ENCODE measurements at regions of chrX and their contacts with region 1.

Region 1: GRCh38 chrX:70970482-70970995 is 39.6 kb upstream of the SLC7A3 start:
- DNase-seq: no peak
- H3K4me3 Mint-ChIP-seq: no peak overlapping the region
- H3K27ac Mint-ChIP-seq: no peak overlapping the region
- H3K4me1 Mint-ChIP-seq: peaks cover 6% of the 10 kb centered on the region
- H3K27me3 Mint-ChIP-seq: peaks cover 8% of the 10 kb centered on the region

Region 2: DNA sequence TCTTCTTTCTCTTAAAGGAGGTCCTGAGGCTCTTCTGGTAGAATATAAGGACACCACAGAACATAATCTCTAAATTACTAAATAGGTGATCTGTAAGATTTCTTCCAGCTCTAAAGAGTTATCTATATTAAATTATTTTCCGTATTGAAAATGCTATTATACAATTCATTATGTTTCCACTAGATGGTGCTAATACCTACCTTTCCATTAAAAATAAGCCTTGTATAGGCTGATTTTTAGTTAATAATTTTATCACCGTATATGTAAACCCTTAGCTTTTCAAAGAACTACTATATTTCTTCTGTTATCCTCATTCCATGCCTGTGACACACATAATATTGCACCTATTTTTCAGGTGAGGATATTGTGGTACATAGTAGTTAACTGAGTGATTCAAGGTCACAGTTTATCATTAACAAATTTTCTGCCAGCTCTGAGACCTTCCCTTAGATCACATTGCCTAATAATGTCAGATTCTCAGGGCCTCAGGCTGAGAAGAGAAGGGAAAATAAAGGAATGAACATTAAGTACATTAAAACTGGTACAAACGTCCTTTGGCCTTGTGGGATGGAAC is 200.8 kb before region 1 on chrX:
- intact Hi-C with region 1: loop called (anchors 10 kb)
- DNase-seq: no peak
- H3K4me3 Mint-ChIP-seq: no peak overlapping the region
- H3K27ac Mint-ChIP-seq: no peak overlapping the region
- H3K4me1 Mint-ChIP-seq: no peaks in the 10 kb centered on the region
- H3K27me3 Mint-ChIP-seq: peaks cover 2% of the 10 kb centered on the region

Region 3: DNA sequence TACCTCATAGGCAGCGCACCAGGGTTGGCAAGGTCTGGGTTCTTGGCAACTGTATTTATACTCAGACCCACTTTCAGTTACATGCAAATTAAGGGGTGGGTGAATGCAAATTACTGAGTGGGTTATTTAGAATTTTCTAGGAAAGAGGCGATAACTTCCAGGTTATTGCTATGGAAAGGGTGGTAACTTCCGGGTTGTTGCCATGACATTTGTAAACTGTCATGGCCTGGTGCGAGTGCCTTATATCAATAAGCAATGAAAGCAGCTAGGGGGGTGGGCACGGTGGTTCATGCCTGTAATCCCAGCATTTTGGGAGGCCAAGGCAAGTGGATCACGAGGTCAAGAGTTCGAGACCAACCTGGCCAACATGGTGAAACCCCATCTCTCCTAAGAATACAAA is 17.9 kb after region 1 on chrX:
- intact Hi-C with region 1: no loop called
- DNase-seq: no peak
- H3K4me3 Mint-ChIP-seq: no peak overlapping the region
- H3K27ac Mint-ChIP-seq: no peak overlapping the region
- H3K4me1 Mint-ChIP-seq: no peaks in the 10 kb centered on the region
- H3K27me3 Mint-ChIP-seq: peaks cover 1% of the 10 kb centered on the region